Naive thymus-derived CD4-positive, alpha-beta T cell (primary cell): ENCODE measurements at regions of chr4 and their contacts with region 1.

Region 1: DNA sequence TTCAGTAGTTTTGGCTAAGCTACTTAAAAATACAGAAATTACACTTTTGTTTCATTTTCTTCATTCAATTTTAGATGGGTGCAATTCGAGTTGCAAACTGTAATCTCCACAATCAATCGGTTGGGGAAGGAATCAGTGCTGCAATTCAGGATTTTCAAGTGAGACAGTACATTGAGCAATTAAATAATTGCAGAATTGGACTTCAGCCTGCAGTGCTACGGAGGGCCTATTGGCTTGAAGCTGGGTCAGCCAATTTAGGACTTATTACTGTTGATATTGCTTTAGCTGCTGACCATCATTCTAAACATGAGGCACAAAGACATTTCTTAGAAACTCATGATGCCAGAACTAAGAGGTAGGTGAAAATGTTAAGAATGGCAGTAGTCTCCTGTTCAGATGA is 77.7 kb downstream of the BLTP1 start:
- DNase-seq: no peak
- ATAC-seq: no peak
- H3K4me3 ChIP-seq: no peak overlapping the region
- H3K4me3 Mint-ChIP-seq: no peak overlapping the region
- H3K27ac ChIP-seq: no peak overlapping the region
- H3K27ac Mint-ChIP-seq: no peak overlapping the region
- H3K4me1 ChIP-seq: no peaks in the 10 kb centered on the region
- H3K4me1 Mint-ChIP-seq: peaks cover 0 to 3% (median 0%) of the 10 kb centered on the region in 7 donors
- H3K27me3 ChIP-seq: no peaks in the 10 kb centered on the region
- H3K27me3 Mint-ChIP-seq: no peaks in the 10 kb centered on the region

Region 2: GRCh38 chr4:122065915-122066314 is 163.9 kb before region 1 on chr4:
- CTCF ChIA-PET with region 1: no interaction called
- POLR2A ChIA-PET with region 1: no interaction called
- intact Hi-C with region 1: no loop called
- DNase-seq: no peak
- ATAC-seq: no peak
- H3K4me3 ChIP-seq: no peak overlapping the region
- H3K4me3 Mint-ChIP-seq: no peak overlapping the region
- H3K27ac ChIP-seq: no peak overlapping the region
- H3K27ac Mint-ChIP-seq: no peak overlapping the region
- H3K4me1 ChIP-seq: no peaks in the 10 kb centered on the region
- H3K4me1 Mint-ChIP-seq: no peaks in the 10 kb centered on the region
- H3K27me3 ChIP-seq: no peaks in the 10 kb centered on the region
- H3K27me3 Mint-ChIP-seq: peaks cover 0 to 19% (median 3%) of the 10 kb centered on the region in 5 donors

Region 3: DNA sequence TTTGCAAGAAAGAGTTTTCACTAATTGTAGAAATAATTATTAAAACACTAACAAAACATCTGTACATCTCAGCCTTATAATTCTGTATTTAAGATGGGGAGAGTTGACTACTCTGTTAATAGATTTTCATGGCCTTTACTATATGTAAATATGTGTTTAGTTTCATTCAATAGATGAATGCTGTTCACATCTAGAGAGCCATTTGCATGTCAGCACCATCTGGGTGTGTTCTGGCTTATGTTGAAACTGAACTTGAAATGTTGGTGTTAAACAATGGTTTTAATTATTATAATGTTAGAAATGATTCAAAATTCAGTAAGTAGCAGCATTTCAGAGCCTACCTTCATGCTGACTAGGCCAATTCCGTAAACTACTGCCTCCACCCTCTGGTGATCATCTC is 46.5 kb after region 1 on chr4:
- CTCF ChIA-PET with region 1: no interaction called
- POLR2A ChIA-PET with region 1: no interaction called
- intact Hi-C with region 1: loop called in 1 of 2 experiments (anchors 5 kb)
- DNase-seq: no peak
- ATAC-seq: no peak
- H3K4me3 ChIP-seq: no peak overlapping the region
- H3K4me3 Mint-ChIP-seq: no peak overlapping the region
- H3K27ac ChIP-seq: no peak overlapping the region
- H3K27ac Mint-ChIP-seq: no peak overlapping the region
- H3K4me1 ChIP-seq: no peaks in the 10 kb centered on the region
- H3K4me1 Mint-ChIP-seq: no peaks in the 10 kb centered on the region
- H3K27me3 ChIP-seq: no peaks in the 10 kb centered on the region
- H3K27me3 Mint-ChIP-seq: no peaks in the 10 kb centered on the region